ENCODE measurements at regions of chr3 and their contacts with region 1.

Region 1: DNA sequence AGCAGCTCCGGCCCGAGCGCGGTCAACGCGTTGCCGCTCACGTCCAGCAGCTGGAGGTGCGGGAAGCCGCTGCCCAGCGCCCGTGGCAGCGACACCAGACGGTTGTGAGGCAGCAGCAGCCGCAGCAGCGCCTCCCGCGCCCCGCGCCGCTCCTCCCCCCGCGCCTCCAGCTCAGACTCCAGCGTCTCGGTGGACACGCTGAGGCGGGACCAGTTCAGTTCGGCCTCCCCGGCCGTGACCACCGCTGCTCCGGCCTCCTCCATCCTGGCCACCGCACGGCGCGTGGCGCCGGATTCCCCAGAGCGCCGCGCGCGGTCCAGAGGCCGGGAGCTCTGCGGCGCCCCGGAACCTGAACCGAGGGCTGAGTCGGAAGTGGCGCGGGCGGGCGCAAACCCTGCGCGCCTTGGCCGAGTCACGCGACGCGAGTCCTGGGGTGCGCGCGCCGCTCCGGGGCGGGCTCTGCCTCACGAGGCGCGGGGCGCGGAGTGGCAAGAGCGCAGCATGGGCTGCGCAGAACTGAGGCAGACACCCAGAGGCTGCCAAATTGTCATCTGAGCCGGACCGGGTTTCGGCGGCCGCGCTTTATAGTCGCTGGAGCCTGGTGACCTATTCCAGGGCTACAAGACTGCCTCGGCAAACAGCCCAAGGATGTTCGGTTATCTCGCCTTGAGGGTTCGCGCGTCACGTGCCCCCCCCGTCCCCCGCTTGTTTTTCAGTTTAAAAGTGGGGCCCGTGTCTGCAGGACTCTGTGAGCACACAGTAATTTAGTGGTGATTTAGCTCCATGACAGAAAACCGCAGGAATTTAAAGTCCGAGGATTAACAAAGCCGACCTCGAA is at the start of gene LRRC58:
- DNase-seq: peak; percentile 95
- H3K4me3 ChIP-seq: peak within 1 kb of the TSS; percentile 62 to 92 (median 84)
- H3K27ac ChIP-seq: peak within 1 kb of the TSS; percentile 84 to 96 (median 94)
- H3K4me1 ChIP-seq: peaks cover 0 to 40% (median 30%) of the 10 kb centered on the region in 4 donors
- H3K27me3 ChIP-seq: no peaks in the 10 kb centered on the region
- CTCF ChIP-seq: peak in 2 of 4 experiments; percentile 23 to 29
- EP300 ChIP-seq: peak in 1 of 4 donors; percentile 44
- POLR2A ChIP-seq: peak; percentile 82 to 83
- total RNA-seq, gene LRRC58: 34.5 to 48.5 (median 43.4) TPM

Region 2: DNA sequence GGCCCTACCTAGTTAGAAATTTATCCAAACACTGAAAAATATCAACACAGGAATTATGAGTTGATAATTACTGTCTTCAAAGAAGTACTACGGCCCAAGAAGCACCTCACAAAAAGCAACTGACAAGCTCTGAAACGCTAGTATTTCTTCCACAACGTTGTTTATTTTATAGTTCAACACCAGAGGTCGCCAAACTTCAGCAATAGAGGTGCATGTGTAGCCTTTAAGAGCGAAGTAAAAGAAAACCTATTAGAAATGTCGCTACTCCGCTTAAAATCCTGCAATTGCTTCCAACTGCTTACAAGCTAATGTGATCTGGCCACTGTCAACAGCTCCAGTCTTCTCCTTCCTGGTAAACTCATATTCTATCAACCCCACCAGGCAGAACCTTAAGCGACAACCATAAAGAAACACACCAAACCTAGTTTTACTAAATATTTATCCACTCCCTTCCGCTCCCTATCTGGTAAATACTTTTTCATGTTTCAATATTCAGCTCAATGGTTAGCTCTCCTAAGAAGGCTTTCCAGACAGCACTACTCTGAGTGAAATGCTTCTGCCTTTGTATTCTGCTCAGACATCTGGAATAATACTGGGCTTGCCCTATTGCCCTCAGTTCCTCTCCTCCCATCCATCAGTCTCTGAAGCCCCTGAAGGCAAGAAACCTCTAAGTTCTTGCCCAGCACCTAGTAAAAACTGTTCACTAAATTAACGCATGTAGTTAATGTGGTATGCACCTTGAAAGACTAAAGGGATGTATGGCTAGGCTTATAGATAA is 457.1 kb before region 1 on chr3:
- intact Hi-C with region 1: loop called (anchors 10 kb)
- DNase-seq: no peak
- H3K4me3 ChIP-seq: peak overlapping the region in 2 of 4 donors; percentile 10 to 18
- H3K27ac ChIP-seq: peak overlapping the region in 3 of 4 donors; percentile 34 to 55 (median 36)
- H3K4me1 ChIP-seq: peaks cover 0 to 11% (median 0%) of the 10 kb centered on the region in 4 donors
- H3K27me3 ChIP-seq: no peaks in the 10 kb centered on the region
- CTCF ChIP-seq: peak; percentile 58 to 69 (median 58)
- EP300 ChIP-seq: no peak
- POLR2A ChIP-seq: no peak

Region 3: GRCh38 chr3:120245386-120245785 is 103.8 kb before region 1 on chr3:
- intact Hi-C with region 1: loop called (anchors 1 kb)
- DNase-seq: no peak
- H3K4me3 ChIP-seq: no peak overlapping the region
- H3K27ac ChIP-seq: no peak overlapping the region
- H3K4me1 ChIP-seq: peaks cover 0 to 5% (median 2%) of the 10 kb centered on the region in 4 donors
- H3K27me3 ChIP-seq: no peaks in the 10 kb centered on the region
- CTCF ChIP-seq: no peak
- EP300 ChIP-seq: no peak
- POLR2A ChIP-seq: no peak

Region 4: GRCh38 chr3:120284747-120285507 is 64.3 kb before region 1 on chr3 and contains the start of gene GPR156:
- intact Hi-C with region 1: loop called (anchors 5 kb)
- DNase-seq: no peak
- H3K4me3 ChIP-seq: peak within 1 kb of the TSS; percentile 36 to 67 (median 57)
- H3K27ac ChIP-seq: peak within 1 kb of the TSS; percentile 20 to 58 (median 40)
- H3K4me1 ChIP-seq: peaks cover 0 to 14% (median 12%) of the 10 kb centered on the region in 4 donors
- H3K27me3 ChIP-seq: no peaks in the 10 kb centered on the region
- CTCF ChIP-seq: no peak
- EP300 ChIP-seq: no peak
- POLR2A ChIP-seq: no peak
- total RNA-seq, gene GPR156: 0.95 to 1.7 (median 1.3) TPM

Region 5: GRCh38 chr3:120399372-120399771 is 50.2 kb after region 1 on chr3:
- intact Hi-C with region 1: loop called (anchors 5 kb)
- DNase-seq: no peak
- H3K4me3 ChIP-seq: no peak overlapping the region
- H3K27ac ChIP-seq: no peak overlapping the region
- H3K4me1 ChIP-seq: peaks cover 0 to 15% (median 3%) of the 10 kb centered on the region in 4 donors
- H3K27me3 ChIP-seq: no peaks in the 10 kb centered on the region
- CTCF ChIP-seq: no peak
- EP300 ChIP-seq: no peak
- POLR2A ChIP-seq: no peak

Region 6: DNA sequence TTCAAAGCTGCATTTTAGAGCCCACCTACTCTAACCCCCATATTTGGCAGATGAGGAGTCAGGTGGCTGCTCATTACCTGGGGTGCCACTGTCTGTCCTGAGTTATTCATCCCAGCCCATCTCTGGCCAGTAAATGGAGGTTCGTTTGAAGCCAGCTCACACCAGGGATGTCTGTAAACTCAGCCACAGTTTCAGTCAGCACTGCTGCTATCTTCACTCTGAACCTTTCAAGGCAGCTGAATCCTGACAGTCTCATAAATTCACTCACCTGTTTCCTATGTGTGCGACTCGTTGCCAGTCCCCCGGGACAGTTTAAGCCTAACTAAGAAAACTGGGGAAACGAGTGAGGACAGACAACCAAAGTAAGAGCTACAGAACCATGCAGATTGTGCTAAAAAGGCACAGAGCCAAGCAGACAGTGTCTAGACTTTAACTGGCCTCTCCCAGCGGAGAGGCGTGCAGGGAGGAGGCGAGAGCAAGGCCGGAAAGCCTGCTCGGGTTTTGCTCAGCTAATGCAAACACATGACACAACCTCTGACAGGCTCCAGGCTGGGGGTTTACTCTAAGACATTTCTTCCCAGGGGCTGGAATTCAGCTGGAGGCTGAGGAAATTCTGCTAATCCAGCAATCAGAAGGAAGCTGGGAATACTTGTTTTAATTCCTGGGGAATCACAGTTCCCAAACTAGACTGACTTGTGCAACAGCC is 89.6 kb after region 1 on chr3:
- intact Hi-C with region 1: no loop called
- DNase-seq: peak; percentile 90
- H3K4me3 ChIP-seq: peak overlapping the region in 1 of 4 donors; percentile 5
- H3K27ac ChIP-seq: peak overlapping the region; percentile 59 to 96 (median 76)
- H3K4me1 ChIP-seq: peaks cover 0 to 98% (median 97%) of the 10 kb centered on the region in 4 donors
- H3K27me3 ChIP-seq: no peaks in the 10 kb centered on the region
- CTCF ChIP-seq: no peak
- EP300 ChIP-seq: no peak
- POLR2A ChIP-seq: no peak

Region 7: DNA sequence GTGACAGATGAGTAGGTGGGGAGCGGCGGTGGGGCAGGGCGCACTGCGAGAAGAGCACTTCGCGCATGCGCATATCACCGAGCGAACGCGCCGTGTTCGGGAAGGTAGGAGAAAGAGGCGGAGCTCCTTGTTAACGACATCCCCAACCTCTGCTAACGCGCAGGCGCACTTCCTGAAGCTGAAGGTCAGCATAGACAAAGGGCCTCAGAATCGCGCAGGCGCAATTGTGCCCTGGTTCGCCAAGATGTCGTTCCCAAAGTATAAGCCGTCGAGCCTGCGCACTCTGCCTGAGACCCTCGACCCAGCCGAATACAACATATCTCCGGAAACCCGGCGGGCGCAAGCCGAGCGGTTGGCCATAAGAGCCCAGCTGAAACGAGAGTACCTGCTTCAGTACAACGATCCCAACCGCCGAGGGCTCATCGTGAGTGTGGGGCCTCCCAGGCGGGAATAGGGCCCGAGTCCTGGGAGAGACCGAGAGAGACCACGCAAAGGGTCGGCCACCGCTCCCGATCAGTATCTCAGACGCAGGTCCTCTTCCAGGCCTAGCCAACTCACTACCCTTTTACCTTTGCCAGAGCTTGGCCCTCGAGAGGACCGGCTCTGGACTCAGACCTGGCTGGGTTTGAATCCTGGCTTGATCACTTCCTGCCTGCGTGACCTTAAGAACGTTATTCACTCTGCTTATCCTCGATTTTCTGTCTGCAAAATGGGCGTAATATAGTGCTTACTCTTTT is 247.1 kb after region 1 on chr3 and contains the start of gene NDUFB4:
- intact Hi-C with region 1: no loop called
- DNase-seq: peak; percentile 99
- H3K4me3 ChIP-seq: peak within 1 kb of the TSS; percentile 62 to 88 (median 76)
- H3K27ac ChIP-seq: peak within 1 kb of the TSS; percentile 89 to 94 (median 90)
- H3K4me1 ChIP-seq: peaks cover 0 to 46% (median 38%) of the 10 kb centered on the region in 4 donors
- H3K27me3 ChIP-seq: no peaks in the 10 kb centered on the region
- CTCF ChIP-seq: no peak
- EP300 ChIP-seq: peak in 1 of 4 donors; percentile 50
- POLR2A ChIP-seq: peak; percentile 78 to 86
- total RNA-seq, gene NDUFB4: 72.3 to 148 (median 113) TPM

Measured in sigmoid colon (tissue), 7 donors.